ENCODE measurements at regions of chr1 and their contacts with region 1.

Region 1: GRCh38 chr1:222441066-222441465 is 106.8 kb downstream of the HHIPL2 start:
- DNase-seq: no peak
- H3K4me3 Mint-ChIP-seq: no peak overlapping the region
- H3K27ac Mint-ChIP-seq: no peak overlapping the region
- H3K4me1 Mint-ChIP-seq: peaks cover 4% of the 10 kb centered on the region
- H3K27me3 Mint-ChIP-seq: no peaks in the 10 kb centered on the region

Region 2: GRCh38 chr1:222161676-222162075 is 279.4 kb before region 1 on chr1:
- CTCF ChIA-PET with region 1: no interaction called
- POLR2A ChIA-PET with region 1: no interaction called
- DNase-seq: no peak
- H3K4me3 Mint-ChIP-seq: no peak overlapping the region
- H3K27ac Mint-ChIP-seq: no peak overlapping the region
- H3K4me1 Mint-ChIP-seq: no peaks in the 10 kb centered on the region
- H3K27me3 Mint-ChIP-seq: no peaks in the 10 kb centered on the region

Region 3: GRCh38 chr1:222310836-222311235 is 130.2 kb before region 1 on chr1:
- CTCF ChIA-PET with region 1: no interaction called
- POLR2A ChIA-PET with region 1: no interaction called
- DNase-seq: peak; percentile 14
- H3K4me3 Mint-ChIP-seq: no peak overlapping the region
- H3K27ac Mint-ChIP-seq: no peak overlapping the region
- H3K4me1 Mint-ChIP-seq: peaks cover 3% of the 10 kb centered on the region
- H3K27me3 Mint-ChIP-seq: no peaks in the 10 kb centered on the region

Region 4: GRCh38 chr1:222455188-222455879 is 14.3 kb after region 1 on chr1:
- CTCF ChIA-PET with region 1: interaction called, 24 read pairs
- POLR2A ChIA-PET with region 1: no interaction called
- DNase-seq: peak; percentile 86
- H3K4me3 Mint-ChIP-seq: no peak overlapping the region
- H3K27ac Mint-ChIP-seq: peak overlapping the region; percentile 72
- H3K4me1 Mint-ChIP-seq: peaks cover 13% of the 10 kb centered on the region
- H3K27me3 Mint-ChIP-seq: no peaks in the 10 kb centered on the region

Measured in activated CD4-positive, alpha-beta T cell treated with anti-CD3 and anti-CD28 coated beads, Interleukin-2, amount 10 ng/mL, durations not matched to agents 7 days and 5 days (primary cell).